ENCODE measurements at regions of chr4 and their contacts with region 1.

Region 1: DNA sequence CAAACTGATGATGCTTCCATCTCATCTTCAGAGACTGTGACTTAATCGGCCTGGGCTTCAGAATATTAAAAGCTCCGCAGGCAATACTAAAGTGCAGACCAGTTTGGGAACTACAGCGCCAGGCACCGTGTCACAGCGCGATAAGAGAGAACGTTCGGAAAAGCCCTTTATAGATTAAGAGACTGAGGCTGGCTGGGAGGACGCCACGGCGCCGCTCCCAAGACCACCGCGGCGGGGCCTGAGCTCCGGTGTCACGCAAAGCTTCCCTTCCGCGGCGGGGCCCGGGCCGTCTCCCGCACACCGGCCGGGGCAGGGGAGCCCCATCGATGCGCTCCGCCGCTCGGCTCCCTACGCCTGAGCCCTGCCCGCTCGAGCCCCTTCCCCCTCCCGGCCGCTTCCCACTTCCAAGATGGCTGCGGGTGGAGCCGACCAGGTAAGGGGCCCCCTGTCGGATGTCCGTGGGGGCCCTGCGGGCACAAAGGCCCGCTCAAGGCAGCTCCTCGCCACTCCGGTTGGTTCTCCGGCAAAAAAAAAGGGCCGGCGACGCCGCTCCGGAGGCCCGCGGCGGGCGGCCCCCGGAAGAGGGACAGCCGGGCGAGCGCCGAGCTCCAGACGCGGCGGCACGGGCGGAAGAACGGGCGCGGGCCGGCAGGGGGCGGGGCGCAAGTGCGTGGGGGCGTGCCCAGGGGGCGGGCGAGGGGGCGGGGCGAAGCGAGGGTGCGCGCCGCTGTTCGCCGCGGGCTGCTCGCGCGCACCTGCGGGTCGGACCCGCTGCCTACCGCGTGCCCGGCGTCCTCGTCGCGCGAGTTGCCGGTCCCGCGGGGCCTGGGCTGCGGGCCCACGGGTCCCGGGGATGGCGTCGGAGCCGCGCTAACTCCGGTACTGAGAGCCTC is at the start of gene TBC1D14:
- DNase-seq: peak; percentile 89 to 91
- ATAC-seq: peak; percentile 93 to 96 (median 95)
- H3K4me3 ChIP-seq: peak within 1 kb of the TSS; percentile 76 to 99 (median 88)
- H3K27ac ChIP-seq: peak within 1 kb of the TSS; percentile 97 to 100 (median 100)
- H3K4me1 ChIP-seq: peaks cover 16 to 55% (median 41%) of the 10 kb centered on the region in 9 donors
- H3K27me3 ChIP-seq: peaks cover 0 to 6% (median 0%) of the 10 kb centered on the region in 7 donors
- CTCF ChIP-seq: peak in 6 of 9 donors; percentile 19 to 47 (median 23)
- total RNA-seq, gene TBC1D14: 31.5 to 43.7 (median 33.5) TPM

Region 2: GRCh38 chr4:6668381-6668780 is 240.9 kb before region 1 on chr4:
- intact Hi-C with region 1: no loop called
- DNase-seq: no peak
- ATAC-seq: no peak
- H3K4me3 ChIP-seq: no peak overlapping the region
- H3K27ac ChIP-seq: no peak overlapping the region
- H3K4me1 ChIP-seq: peaks cover 0 to 17% (median 13%) of the 10 kb centered on the region in 9 donors
- H3K27me3 ChIP-seq: peaks cover 0 to 22% (median 14%) of the 10 kb centered on the region in 7 donors
- CTCF ChIP-seq: no peak

Region 3: GRCh38 chr4:6974138-6974848 is 65.0 kb after region 1 on chr4:
- intact Hi-C with region 1: loop called in 1 of 10 experiments (anchors 5 kb)
- DNase-seq: peak; percentile 79 to 87
- ATAC-seq: peak; percentile 74 to 95 (median 92)
- H3K4me3 ChIP-seq: no peak overlapping the region
- H3K27ac ChIP-seq: peak overlapping the region in 1 of 10 donors; percentile 13
- H3K4me1 ChIP-seq: peaks cover 0 to 25% (median 11%) of the 10 kb centered on the region in 9 donors
- H3K27me3 ChIP-seq: no peaks in the 10 kb centered on the region
- CTCF ChIP-seq: peak; percentile 85 to 99 (median 96)

Region 4: GRCh38 chr4:6986781-6987587 is 77.7 kb after region 1 on chr4:
- intact Hi-C with region 1: loop called in 7 of 10 experiments (anchors 5 kb)
- DNase-seq: peak; percentile 94 to 97
- ATAC-seq: peak; percentile 95 to 98 (median 96)
- H3K4me3 ChIP-seq: peak overlapping the region; percentile 64 to 98 (median 88)
- H3K27ac ChIP-seq: peak overlapping the region; percentile 84 to 98 (median 94)
- H3K4me1 ChIP-seq: peaks cover 13 to 85% (median 57%) of the 10 kb centered on the region in 9 donors
- H3K27me3 ChIP-seq: no peaks in the 10 kb centered on the region
- CTCF ChIP-seq: peak in 2 of 9 donors; percentile 27 to 28

Region 5: DNA sequence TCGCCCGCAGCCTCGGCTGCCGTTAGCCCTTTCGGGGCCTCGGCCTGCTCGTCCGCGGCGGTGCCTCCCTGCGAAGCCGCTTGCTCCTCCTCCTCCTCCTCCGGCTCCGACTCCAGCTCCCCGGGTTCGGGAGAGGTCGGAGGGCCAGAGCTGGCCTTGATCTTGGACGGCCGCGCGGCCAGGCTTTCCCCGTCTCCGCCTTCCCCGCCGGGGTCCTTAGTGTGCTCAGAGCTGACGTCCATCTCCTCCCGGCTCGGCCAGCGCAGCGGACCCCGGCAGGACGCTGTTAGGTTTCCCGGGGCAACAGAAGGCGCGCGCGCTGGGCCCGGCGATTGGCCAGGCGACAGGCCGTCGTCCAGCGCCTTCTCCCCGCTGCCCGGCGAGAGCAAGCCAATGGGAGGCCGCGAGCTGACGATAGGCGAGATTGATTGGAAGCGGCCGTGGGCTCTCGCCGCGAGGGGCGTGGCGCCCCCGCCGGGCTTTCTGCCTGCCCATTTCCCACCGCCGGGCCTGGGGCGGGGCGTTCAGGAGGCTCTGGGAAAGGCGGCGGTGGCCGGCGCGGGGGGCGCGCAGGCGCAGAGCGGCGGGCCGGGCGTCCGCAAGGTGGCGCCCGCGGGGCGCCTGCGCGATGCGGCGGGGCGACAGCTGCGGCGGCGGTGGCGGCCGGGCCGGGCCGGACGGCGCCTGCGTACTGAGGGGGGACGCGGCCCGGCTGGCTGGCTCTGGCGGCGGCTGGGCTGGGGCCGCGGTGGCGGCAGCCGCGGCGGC is 133.6 kb after region 1 on chr4 and contains the start of gene TADA2B:
- intact Hi-C with region 1: loop called in 1 of 10 experiments (anchors 2 kb)
- DNase-seq: peak; percentile 96 to 98
- ATAC-seq: peak; percentile 94 to 97 (median 97)
- H3K4me3 ChIP-seq: peak within 1 kb of the TSS; percentile 83 to 100 (median 99)
- H3K27ac ChIP-seq: peak within 1 kb of the TSS; percentile 86 to 96 (median 94)
- H3K4me1 ChIP-seq: peaks cover 21 to 55% (median 51%) of the 10 kb centered on the region in 9 donors
- H3K27me3 ChIP-seq: no peaks in the 10 kb centered on the region
- CTCF ChIP-seq: peak in 8 of 9 donors; percentile 28 to 57 (median 44)
- total RNA-seq, gene TADA2B: 26.2 to 40.8 (median 31.5) TPM